Transverse colon (tissue), 4 donors: ENCODE measurements at regions of chr20 and their contacts with region 1.

Region 1: GRCh38 chr20:17518339-17519052 is 12.7 kb downstream of the BFSP1 start:
- DNase-seq: no peak
- H3K4me3 ChIP-seq: no peak overlapping the region
- H3K27ac ChIP-seq: no peak overlapping the region
- H3K4me1 ChIP-seq: no peaks in the 10 kb centered on the region
- H3K27me3 ChIP-seq: no peaks in the 10 kb centered on the region
- CTCF ChIP-seq: no peak
- EP300 ChIP-seq: no peak
- POLR2A ChIP-seq: no peak

Region 2: DNA sequence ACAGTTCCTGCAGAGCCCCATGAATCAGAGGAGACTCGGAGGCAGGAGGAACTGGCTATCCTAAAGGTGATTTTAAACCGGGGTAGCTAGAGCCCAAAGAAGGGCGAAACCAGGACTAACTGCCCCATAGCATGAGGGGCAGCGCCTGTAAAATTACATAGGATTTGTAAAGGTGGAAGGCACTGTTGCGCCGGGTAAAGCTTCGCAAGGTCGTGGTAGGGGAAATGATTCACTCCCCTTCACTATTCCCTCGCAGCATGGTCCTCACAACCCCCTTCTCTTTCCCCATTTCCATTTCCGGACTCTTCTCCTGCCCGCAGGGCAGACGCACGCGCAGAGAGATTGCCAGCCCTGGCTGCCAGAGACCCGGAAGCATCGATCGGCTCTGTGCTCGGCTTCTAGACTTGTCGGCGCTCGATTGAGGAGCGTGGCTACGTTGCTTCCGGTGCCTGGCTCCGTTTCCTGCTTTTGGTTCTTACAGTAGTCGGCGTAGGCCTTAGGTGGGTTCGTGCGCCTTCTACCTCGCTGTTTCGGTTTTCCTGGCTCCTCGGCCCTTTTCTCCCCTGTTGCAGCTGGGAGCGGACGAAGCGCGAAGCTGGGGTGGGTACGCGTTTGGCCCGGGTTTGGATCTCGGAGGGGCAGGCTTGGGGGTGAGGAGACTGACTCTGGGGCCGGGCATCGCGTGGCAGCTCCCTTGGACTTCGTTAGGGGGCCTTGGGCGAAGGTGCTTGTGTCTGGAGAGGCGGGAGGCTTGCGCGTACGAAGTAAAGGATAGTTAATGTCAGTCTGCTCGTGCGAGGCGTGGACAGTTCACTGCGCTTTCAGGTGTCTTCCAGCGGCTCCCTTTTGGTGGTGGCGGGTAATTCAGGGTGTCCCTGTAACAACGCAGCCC is 788.7 kb before region 1 on chr20 and contains the start of gene SNRPB2:
- in situ Hi-C with region 1: no loop called
- intact Hi-C with region 1: no loop called
- DNase-seq: peak; percentile 93
- H3K4me3 ChIP-seq: peak within 1 kb of the TSS; percentile 78 to 99 (median 96)
- H3K27ac ChIP-seq: peak within 1 kb of the TSS; percentile 75 to 92 (median 87)
- H3K4me1 ChIP-seq: peaks cover 0 to 19% (median 12%) of the 10 kb centered on the region in 4 donors
- H3K27me3 ChIP-seq: peaks cover 29% of the 10 kb centered on the region
- CTCF ChIP-seq: no peak
- EP300 ChIP-seq: no peak
- POLR2A ChIP-seq: peak; percentile 82
- total RNA-seq, gene SNRPB2: 20.3 to 52.1 (median 30.9) TPM

Region 3: GRCh38 chr20:17873410-17874270 is 355.1 kb after region 1 on chr20:
- in situ Hi-C with region 1: no loop called
- intact Hi-C with region 1: no loop called
- DNase-seq: peak; percentile 91
- H3K4me3 ChIP-seq: no peak overlapping the region
- H3K27ac ChIP-seq: peak overlapping the region; percentile 86 to 90 (median 88)
- H3K4me1 ChIP-seq: peaks cover 36 to 65% (median 53%) of the 10 kb centered on the region in 4 donors
- H3K27me3 ChIP-seq: no peaks in the 10 kb centered on the region
- CTCF ChIP-seq: no peak
- EP300 ChIP-seq: no peak
- POLR2A ChIP-seq: peak; percentile 71

Region 4: DNA sequence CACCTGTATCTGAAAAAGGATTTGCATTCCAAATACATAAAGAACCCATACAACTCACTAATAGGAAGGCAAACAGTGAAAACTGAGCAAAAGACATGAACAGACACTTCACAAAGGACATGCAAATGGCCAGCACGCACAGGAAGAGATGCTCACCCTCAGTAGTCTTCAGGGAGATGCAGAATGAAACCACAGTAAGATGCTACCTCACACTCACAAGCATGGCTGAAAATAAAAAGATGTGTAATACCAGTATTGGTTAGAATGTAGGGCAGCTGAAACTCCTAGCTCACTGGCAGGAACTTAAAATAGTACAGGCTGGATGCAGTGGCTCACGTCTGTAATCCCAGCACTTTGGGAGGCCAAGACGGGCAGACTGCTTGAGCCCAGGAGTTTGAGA is 385.5 kb after region 1 on chr20:
- in situ Hi-C with region 1: loop called in 2 of 4 experiments (anchors 10 to 25 kb)
- intact Hi-C with region 1: no loop called
- DNase-seq: no peak
- H3K4me3 ChIP-seq: no peak overlapping the region
- H3K27ac ChIP-seq: no peak overlapping the region
- H3K4me1 ChIP-seq: no peaks in the 10 kb centered on the region
- H3K27me3 ChIP-seq: no peaks in the 10 kb centered on the region
- CTCF ChIP-seq: no peak
- EP300 ChIP-seq: no peak
- POLR2A ChIP-seq: no peak

Region 5: DNA sequence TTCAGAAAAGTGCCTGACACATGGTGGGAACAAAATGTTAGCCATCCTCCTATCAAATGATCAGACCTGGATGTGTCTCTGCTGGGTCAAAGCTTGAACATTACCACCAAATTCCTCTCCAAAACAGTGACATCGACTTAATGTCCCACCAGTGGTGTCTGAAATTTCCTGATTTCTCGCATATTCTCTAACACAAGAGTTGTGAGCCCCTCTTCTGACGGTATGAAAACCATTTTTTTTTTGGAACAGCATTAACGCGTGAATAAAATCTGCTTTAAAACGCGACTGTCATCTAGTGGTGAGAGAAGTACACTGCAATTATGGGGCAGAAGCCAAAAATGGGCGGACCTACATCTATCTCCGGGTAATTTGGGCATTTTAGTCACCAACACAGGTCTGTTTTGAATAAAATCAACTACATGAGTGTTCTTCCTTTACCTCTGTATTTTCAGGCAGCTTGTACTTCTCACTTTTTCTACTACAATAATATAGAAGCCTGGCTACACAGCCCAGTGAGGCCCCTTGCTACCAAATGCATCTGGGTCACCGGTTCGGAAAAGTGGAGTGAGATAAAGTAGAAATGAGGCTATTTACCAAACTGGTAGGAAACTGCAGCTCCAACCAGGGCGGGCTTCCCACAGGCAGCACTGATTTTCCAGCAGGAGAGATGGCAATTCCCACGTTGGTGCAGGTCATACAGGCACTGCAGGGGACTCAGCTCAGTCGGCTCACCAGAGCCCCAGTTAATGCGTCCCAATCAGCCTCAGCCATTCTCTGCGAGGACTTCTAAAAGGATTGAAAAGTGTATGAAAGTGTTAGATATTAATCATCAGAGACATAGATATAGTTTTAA is 477.7 kb after region 1 on chr20:
- in situ Hi-C with region 1: loop called in 2 of 4 experiments (anchors 10 to 25 kb)
- intact Hi-C with region 1: no loop called
- DNase-seq: no peak
- H3K4me3 ChIP-seq: no peak overlapping the region
- H3K27ac ChIP-seq: no peak overlapping the region
- H3K4me1 ChIP-seq: peaks cover 0 to 15% (median 3%) of the 10 kb centered on the region in 4 donors
- H3K27me3 ChIP-seq: no peaks in the 10 kb centered on the region
- CTCF ChIP-seq: peak; percentile 96 to 98 (median 98)
- EP300 ChIP-seq: no peak
- POLR2A ChIP-seq: no peak